AG04450 (cell line): ENCODE measurements at regions of chr12 and their contacts with region 1.

Region 1: GRCh38 chr12:110896559-110896958 is 23.8 kb downstream of the MYL2 start:
- DNase-seq: no peak
- H3K4me3 ChIP-seq: no peak overlapping the region
- H3K27ac ChIP-seq: no peak overlapping the region
- H3K27me3 ChIP-seq: peaks cover 4% of the 10 kb centered on the region
- CTCF ChIP-seq: no peak

Region 2: GRCh38 chr12:110829288-110829687 is 67.3 kb before region 1 on chr12:
- CTCF ChIA-PET with region 1: interaction called, 10 read pairs
- POLR2A ChIA-PET with region 1: no interaction called
- DNase-seq: no peak
- H3K4me3 ChIP-seq: no peak overlapping the region
- H3K27ac ChIP-seq: no peak overlapping the region
- H3K27me3 ChIP-seq: peaks cover 3% of the 10 kb centered on the region
- CTCF ChIP-seq: no peak

Region 3: GRCh38 chr12:111389635-111390034 is 493.1 kb after region 1 on chr12:
- CTCF ChIA-PET with region 1: no interaction called
- POLR2A ChIA-PET with region 1: no interaction called
- DNase-seq: no peak
- H3K4me3 ChIP-seq: no peak overlapping the region
- H3K27ac ChIP-seq: no peak overlapping the region
- H3K27me3 ChIP-seq: peaks cover 5% of the 10 kb centered on the region
- CTCF ChIP-seq: no peak

Region 4: GRCh38 chr12:111607239-111607638 is 710.7 kb after region 1 on chr12:
- CTCF ChIA-PET with region 1: no interaction called
- POLR2A ChIA-PET with region 1: no interaction called
- DNase-seq: no peak
- H3K4me3 ChIP-seq: no peak overlapping the region
- H3K27ac ChIP-seq: no peak overlapping the region
- H3K27me3 ChIP-seq: no peaks in the 10 kb centered on the region
- CTCF ChIP-seq: no peak